HCT116 (cell line): ENCODE measurements at regions of chr16 and their contacts with region 1.

Region 1: DNA sequence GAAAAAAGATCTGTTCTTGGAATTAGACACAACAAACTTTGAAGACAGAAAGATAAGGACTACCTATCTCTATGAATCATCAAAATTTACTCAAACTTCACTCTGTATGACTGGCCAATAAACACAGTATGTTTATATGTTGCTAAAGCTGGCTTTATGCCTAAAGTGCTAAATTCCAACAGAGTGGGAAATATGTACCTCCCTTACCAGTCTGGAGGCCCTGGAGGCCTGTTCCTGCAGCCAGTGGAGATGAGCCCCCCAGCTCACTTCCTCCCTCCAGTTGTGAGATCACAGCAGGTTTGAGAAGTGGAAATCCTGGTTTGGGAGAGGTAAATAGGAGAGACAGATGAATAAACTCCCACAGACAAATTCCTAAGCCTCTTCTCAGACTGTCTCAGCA is 9.0 kb downstream of the ZNF23 start:
- DNase-seq: no peak
- ATAC-seq: no peak
- H3K4me3 ChIP-seq: no peak overlapping the region
- H3K27ac ChIP-seq: no peak overlapping the region
- H3K4me1 ChIP-seq: no peaks in the 10 kb centered on the region
- H3K27me3 ChIP-seq: no peaks in the 10 kb centered on the region
- CTCF ChIP-seq: no peak
- POLR2A ChIP-seq: no peak
- RAD21 ChIP-seq: no peak

Region 2: DNA sequence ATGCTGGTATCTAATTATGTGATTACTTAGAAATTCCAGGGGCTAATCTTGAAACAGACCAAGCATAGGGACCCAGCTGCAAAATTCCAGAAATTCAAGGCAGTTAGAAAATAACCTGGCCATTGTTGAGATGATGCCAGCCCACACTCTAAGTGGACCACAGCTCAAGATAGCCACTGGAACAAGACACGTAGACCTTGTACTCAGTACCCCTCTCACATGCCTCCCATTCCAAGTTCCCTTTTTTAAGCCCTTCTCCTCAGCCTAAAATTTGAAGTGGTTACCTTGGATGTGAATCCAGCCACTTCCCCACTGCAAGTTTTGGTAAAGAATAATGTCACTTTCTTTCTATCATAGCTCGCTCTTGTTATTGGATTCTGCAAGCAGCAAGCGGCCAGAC is 40.2 kb after region 1 on chr16:
- CTCF ChIA-PET with region 1: no interaction called
- POLR2A ChIA-PET with region 1: no interaction called
- RAD21 ChIA-PET with region 1: no interaction called
- intact Hi-C with region 1: loop called (anchors 5 kb)
- DNase-seq: no peak
- ATAC-seq: no peak
- H3K4me3 ChIP-seq: no peak overlapping the region
- H3K27ac ChIP-seq: no peak overlapping the region
- H3K4me1 ChIP-seq: no peaks in the 10 kb centered on the region
- H3K27me3 ChIP-seq: no peaks in the 10 kb centered on the region
- CTCF ChIP-seq: no peak
- POLR2A ChIP-seq: no peak
- RAD21 ChIP-seq: no peak